Activated B cell treated with CpG ODN at 0.5 μM for 24 hours (primary cell): ENCODE measurements at regions of chr17 and their contacts with region 1.

Region 1: DNA sequence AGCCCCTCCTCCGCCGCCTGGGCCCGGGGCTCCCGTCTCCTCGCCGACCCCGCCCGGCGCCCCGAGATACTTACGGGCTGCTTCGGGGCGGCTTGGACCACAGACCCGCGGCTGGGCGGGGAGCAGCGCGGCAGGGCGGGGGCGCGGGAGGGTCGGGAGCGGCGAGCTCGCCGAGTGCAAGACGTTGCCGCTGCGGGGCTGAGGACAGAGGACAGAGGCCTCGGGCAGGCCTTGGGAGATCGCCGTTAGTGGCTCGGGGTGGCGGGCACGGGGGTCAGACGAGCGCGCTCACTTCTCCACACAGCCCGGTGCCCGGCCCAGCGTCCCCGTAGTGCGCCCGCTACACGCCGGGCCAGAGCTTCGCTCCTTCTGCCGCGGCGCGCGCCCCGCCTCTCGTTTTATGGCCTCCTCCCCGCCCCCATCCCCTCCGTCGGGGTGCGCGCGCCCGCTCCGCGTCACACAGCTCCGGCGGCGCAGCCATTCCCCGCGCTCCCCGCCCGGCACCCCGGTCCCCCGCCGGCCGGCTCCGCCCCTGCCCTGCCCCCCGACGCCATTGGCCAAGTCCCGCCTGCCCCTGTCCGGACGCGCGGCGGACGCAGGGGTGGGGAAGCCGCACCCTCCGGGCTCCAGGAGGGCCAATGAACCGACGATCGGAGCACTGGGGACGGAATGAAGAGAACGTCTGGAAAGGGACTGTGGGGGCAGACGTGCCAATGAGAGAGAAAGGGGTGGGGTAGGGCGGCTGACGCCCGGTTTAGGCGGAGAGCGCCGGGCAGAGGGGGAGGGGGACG is at the start of gene TOB1:
- DNase-seq: peak; percentile 97
- ATAC-seq: peak; percentile 76
- H3K4me3 Mint-ChIP-seq: peak within 1 kb of the TSS; percentile 99
- H3K27ac Mint-ChIP-seq: peak within 1 kb of the TSS; percentile 100
- H3K4me1 Mint-ChIP-seq: peaks cover 44% of the 10 kb centered on the region
- H3K27me3 Mint-ChIP-seq: no peaks in the 10 kb centered on the region
- CTCF ChIP-seq: no peak
- total RNA-seq, gene TOB1: 18.8 and 20.4 TPM in 2 replicates

Region 2: GRCh38 chr17:50719144-50719923 is 146.8 kb before region 1 on chr17 and contains the start of gene LUC7L3:
- CTCF ChIA-PET with region 1: no interaction called
- POLR2A ChIA-PET with region 1: interaction called, 29 read pairs
- intact Hi-C with region 1: loop called (anchors 1 kb)
- DNase-seq: peak; percentile 97
- ATAC-seq: peak; percentile 92
- H3K4me3 Mint-ChIP-seq: peak within 1 kb of the TSS; percentile 97
- H3K27ac Mint-ChIP-seq: peak within 1 kb of the TSS; percentile 98
- H3K4me1 Mint-ChIP-seq: peaks cover 45% of the 10 kb centered on the region
- H3K27me3 Mint-ChIP-seq: no peaks in the 10 kb centered on the region
- CTCF ChIP-seq: no peak
- total RNA-seq, gene LUC7L3: 158 and 162 TPM in 2 replicates

Region 3: DNA sequence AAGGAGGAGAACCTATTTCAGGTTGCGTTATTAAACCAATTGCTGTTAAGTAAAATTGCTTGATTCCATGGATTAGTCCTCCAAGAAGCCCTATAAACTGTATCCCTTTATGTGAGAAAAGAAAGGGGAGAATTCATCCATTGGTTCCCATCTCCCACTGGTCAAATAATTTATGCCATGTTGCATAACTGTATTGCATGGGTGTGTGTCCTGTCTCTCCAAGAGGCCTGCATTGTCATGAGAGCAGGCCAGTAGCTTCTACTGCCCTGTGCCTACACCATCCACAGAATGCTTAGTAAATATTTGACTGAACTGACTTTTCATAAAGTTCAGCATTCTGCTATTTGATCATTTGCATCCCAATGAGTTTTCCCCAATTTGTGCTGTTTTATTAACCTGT is 11.7 kb after region 1 on chr17:
- CTCF ChIA-PET with region 1: no interaction called
- POLR2A ChIA-PET with region 1: interaction called, 41 read pairs
- intact Hi-C with region 1: no loop called
- DNase-seq: no peak
- ATAC-seq: no peak
- H3K4me3 Mint-ChIP-seq: no peak overlapping the region
- H3K27ac Mint-ChIP-seq: no peak overlapping the region
- H3K4me1 Mint-ChIP-seq: peaks cover 4% of the 10 kb centered on the region
- H3K27me3 Mint-ChIP-seq: no peaks in the 10 kb centered on the region
- CTCF ChIP-seq: no peak

Region 4: DNA sequence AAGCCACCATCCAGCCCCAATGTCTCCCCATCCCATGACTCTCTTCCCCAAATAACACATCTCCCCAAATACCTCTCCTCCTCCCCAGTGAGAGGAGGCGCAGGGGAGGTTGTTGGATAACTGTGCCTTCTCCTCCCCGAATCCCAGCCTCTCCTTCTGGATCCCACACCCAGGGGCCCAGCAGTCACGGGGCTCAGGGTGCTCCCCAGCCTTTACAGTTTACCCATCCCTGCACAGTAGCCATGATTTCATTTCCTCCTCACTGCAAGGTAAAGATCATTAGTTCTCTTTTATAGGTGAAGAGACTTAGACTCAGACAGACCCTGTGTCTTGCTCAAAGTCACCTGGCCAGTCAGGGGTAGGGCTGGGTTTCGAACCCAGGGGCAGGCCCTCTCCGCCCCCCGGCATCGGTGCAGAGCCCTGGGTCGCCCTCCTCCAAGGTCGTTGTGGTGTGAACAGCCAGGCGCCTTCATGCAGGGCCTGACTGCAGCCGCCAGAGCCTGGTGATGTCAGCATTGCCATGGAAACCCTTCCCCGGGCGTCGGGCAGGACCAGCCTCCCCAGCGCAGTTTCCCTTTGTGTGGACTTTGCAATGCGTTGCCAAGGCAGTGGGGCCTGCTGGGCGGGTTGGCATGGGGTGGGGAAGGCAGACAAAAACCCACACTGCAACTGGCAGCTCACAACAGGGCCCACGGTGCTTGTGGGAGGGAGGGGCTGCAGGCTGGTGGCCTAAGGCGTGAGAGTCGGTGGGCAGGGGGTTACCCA is 53.3 kb after region 1 on chr17:
- CTCF ChIA-PET with region 1: no interaction called
- POLR2A ChIA-PET with region 1: interaction called, 50 read pairs
- intact Hi-C with region 1: loop called (anchors 2 kb)
- DNase-seq: peak; percentile 37
- ATAC-seq: peak; percentile 73
- H3K4me3 Mint-ChIP-seq: no peak overlapping the region
- H3K27ac Mint-ChIP-seq: peak overlapping the region; percentile 50
- H3K4me1 Mint-ChIP-seq: peaks cover 32% of the 10 kb centered on the region
- H3K27me3 Mint-ChIP-seq: no peaks in the 10 kb centered on the region
- CTCF ChIP-seq: no peak

Region 5: DNA sequence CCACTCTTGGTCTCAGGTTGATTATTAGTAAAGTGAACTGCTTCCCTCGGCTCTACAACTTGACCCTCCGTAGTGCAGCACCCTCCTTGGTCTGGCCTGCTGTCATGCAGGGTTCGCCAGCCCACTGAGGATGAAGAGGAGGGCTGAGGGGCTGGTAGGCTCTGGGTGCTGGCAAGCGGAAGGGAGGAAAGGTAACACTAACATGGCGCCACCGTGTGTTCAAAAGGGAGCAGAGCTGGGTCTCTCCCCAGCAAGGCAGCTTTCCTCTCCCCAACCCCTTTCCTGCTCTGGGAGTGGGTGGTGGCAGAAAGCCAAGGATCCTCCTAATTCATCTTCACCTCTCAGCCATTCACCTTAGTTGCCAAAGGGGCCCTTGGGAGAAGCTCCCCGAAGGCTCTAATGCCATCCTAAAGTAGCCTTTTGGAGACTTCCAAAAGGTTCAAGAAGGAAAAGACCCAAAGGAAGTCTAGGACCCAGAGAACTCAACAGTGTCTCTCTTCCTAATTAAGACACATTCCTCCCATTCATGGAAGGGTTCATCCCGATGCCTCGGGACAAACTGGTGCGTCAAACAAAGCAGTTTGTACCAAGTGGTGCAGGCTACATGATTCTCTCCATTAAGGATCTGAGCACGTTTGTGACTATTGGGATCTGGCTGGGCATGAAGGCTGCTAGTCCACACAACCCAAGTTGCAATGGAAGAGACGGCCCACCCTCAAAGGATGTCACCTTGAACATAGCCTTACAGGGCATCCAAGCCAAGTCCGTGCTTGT is 90.8 kb after region 1 on chr17:
- CTCF ChIA-PET with region 1: interaction called, 10 read pairs
- POLR2A ChIA-PET with region 1: interaction called, 23 read pairs
- intact Hi-C with region 1: loop called (anchors 1 kb)
- DNase-seq: peak; percentile 45
- ATAC-seq: peak; percentile 92
- H3K4me3 Mint-ChIP-seq: no peak overlapping the region
- H3K27ac Mint-ChIP-seq: no peak overlapping the region
- H3K4me1 Mint-ChIP-seq: peaks cover 2% of the 10 kb centered on the region
- H3K27me3 Mint-ChIP-seq: no peaks in the 10 kb centered on the region
- CTCF ChIP-seq: no peak

Region 6: GRCh38 chr17:51120739-51121617 is 254.8 kb after region 1 on chr17 and contains the start of gene SPAG9:
- CTCF ChIA-PET with region 1: no interaction called
- POLR2A ChIA-PET with region 1: interaction called, 27 read pairs
- intact Hi-C with region 1: loop called (anchors 1 kb)
- DNase-seq: peak; percentile 95
- ATAC-seq: peak; percentile 83
- H3K4me3 Mint-ChIP-seq: peak within 1 kb of the TSS; percentile 94
- H3K27ac Mint-ChIP-seq: peak within 1 kb of the TSS; percentile 99
- H3K4me1 Mint-ChIP-seq: peaks cover 56% of the 10 kb centered on the region
- H3K27me3 Mint-ChIP-seq: no peaks in the 10 kb centered on the region
- CTCF ChIP-seq: no peak
- total RNA-seq, gene SPAG9: 41.6 and 49.3 TPM in 2 replicates

Region 7: DNA sequence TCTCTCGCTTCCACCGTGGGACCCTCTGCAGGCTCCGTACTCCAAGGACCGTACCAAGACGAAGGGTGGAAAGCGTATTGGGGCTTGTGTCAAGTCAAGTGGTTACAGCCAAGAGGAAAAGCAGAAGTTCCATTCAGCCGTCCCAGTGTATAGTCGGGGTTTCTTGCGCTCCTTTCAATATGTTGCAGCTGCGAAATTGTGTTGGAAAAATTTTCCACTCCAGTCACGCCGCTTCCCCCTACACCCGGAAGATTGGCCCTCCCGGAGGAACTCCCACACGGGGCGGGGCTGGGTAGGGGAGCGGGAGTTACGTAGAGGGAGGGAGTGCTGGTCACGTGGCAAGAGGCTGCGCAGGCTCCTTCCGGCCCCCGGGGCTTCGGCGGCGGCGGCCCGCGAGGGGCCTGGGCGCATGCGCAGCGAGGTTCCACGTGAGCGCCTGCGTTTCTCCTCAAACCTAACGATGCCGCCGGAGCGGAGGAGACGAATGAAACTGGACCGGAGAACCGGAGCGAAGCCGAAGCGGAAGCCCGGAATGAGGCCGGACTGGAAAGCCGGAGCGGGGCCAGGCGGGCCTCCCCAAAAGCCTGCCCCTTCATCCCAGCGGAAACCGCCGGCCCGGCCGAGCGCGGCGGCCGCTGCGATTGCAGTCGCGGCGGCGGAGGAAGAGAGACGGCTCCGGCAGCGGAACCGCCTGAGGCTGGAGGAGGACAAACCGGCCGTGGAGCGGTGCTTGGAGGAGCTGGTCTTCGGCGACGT is 394.1 kb after region 1 on chr17 and contains the start of gene UTP18:
- CTCF ChIA-PET with region 1: no interaction called
- POLR2A ChIA-PET with region 1: no interaction called
- intact Hi-C with region 1: loop called (anchors 1 kb)
- DNase-seq: peak; percentile 93
- ATAC-seq: peak; percentile 87
- H3K4me3 Mint-ChIP-seq: peak within 1 kb of the TSS; percentile 95
- H3K27ac Mint-ChIP-seq: peak within 1 kb of the TSS; percentile 99
- H3K4me1 Mint-ChIP-seq: peaks cover 63% of the 10 kb centered on the region
- H3K27me3 Mint-ChIP-seq: no peaks in the 10 kb centered on the region
- CTCF ChIP-seq: no peak
- total RNA-seq, gene UTP18: 37.0 and 39.1 TPM in 2 replicates